ENCODE measurements at regions of chr2 and their contacts with region 1.

Region 1: GRCh38 chr2:236352761-236353593 is 88.8 kb upstream of the ASB18 start:
- DNase-seq: no peak
- H3K4me3 ChIP-seq: no peak overlapping the region
- H3K27ac ChIP-seq: no peak overlapping the region
- H3K4me1 ChIP-seq: no peaks in the 10 kb centered on the region
- H3K27me3 ChIP-seq: no peaks in the 10 kb centered on the region
- CTCF ChIP-seq: peak; percentile 73 to 86 (median 80)
- POLR2A ChIP-seq: no peak

Region 2: DNA sequence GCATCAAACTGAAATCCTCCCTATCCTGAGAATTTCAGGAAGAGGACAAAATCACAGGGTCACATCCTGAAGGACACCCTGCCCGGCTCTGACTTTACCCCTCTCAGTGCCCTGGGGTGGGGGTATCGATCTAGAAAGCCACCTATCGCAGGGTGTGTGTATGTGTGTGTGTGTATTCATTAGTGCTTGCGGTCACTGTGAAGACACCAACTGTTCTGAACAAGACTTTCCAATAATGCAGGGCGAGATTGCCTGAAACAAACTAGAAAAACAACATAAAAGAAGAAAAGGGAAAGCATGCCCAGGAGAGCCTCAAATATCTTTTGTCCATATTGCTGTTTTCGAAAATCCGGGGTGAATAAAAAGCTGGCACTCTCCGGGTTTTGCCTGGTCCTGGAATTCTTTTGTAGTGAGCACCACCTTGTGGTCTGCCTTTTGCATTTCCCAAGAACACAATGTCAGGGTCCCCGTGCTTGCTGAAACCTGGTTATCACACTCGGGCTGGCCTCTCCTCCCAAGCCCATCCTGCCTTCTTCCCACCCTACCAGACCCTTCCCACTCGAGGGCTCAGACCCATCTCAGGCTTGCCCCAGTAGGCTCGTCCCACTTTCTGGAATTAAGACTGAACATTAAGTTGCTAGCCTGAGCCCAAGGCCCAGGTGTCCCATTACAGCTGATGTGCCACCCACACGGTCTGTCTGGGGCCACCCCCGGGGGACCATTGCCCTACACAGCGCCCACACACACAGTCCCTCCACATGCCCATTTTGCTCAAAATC is 707.7 kb after region 1 on chr2:
- intact Hi-C with region 1: loop called (anchors 5 kb)
- DNase-seq: peak; percentile 44 to 52
- H3K4me3 ChIP-seq: no peak overlapping the region
- H3K27ac ChIP-seq: no peak overlapping the region
- H3K4me1 ChIP-seq: no peaks in the 10 kb centered on the region
- H3K27me3 ChIP-seq: no peaks in the 10 kb centered on the region
- CTCF ChIP-seq: peak; percentile 63 to 71 (median 70)
- POLR2A ChIP-seq: no peak

Measured in uterus (tissue), 4 donors.